Activated T-helper 2 cell treated with anti-CD3 and anti-CD28 coated beads, Interferon-gamma antibody, Interleukin-2, Interleukin-4, amounts not matched to agents 10 μg/mL and 5 μg/mL and 100 μg/mL, durations not matched to agents 14 hours and 24 hours and 36 hours (primary cell): ENCODE measurements at regions of chr1 and their contacts with region 1.

Region 1: DNA sequence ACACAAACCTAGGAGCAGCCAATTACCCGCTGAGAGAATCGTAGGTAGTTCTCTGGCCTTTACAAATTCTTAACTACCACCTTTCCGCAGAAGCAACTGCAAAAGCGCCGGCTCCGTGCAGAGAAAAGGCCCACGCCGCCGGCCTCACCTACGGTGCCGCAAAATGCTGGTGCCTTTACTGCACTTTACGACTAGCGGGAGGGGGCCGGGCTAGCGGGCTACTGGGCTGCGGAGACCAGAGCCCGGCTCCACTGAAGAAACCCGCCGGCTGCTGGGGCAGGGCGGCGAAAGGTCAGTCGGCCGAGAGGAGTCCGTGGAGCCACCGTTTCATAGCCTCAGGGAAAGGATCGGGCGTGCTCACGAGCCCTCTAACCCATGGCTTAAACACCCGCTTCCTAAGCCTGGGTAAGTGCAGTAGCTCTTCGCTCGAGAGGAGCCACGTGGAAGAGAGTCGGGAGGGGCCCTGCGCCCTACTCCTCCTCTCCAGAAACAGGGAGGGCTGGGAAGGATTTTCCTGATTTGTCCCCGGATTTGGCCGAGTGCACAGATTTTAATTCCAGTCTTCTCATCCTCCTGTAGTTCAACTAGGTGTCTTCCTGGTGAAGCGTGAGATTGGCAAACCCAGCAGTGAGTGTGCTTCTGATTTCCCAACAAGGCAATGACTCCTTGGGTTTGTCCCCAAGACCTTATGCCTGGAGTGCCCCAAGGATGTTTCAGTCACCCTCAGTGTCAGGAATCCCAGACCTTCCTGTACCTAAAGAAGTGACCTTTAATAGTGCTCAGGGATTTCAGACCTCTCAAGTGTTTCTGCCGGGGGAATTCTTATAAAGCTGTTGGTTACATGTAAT is at the start of gene DPH5:
- DNase-seq: peak; percentile 85
- H3K4me3 Mint-ChIP-seq: peak within 1 kb of the TSS; percentile 99
- H3K27ac Mint-ChIP-seq: peak within 1 kb of the TSS; percentile 94
- H3K4me1 Mint-ChIP-seq: peaks cover 51% of the 10 kb centered on the region
- H3K27me3 Mint-ChIP-seq: no peaks in the 10 kb centered on the region
- total RNA-seq, gene DPH5: 33.5 and 40.0 TPM in 2 replicates

Region 2: DNA sequence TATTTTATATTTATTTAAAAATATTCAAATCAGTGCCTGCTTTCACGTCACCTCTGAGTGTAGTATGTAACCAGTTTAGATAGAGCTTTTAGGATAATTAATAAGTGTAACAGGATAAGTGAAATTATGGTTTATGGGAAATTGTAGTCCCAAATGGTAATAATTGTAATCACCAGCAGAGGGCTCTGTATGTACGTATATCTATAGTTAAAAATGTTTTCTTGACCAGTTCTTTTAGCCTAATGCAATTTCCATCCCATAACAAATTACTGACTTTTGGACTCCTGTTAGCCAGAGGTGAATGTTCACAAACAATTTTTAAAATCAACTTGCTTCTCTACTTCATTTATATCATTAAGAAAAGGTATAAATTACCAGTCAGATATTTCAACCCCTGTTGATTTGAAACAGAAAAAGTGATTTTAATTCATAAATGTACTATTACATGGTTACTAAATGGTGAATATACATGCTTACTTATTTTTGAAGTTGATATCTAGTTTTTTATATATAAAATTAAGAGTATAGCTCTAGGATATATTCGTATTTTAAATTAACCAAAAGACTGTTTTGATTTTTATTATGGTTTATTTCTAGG is 104.7 kb before region 1 on chr1:
- intact Hi-C with region 1: loop called (anchors 5 kb)
- DNase-seq: no peak
- H3K4me3 Mint-ChIP-seq: no peak overlapping the region
- H3K27ac Mint-ChIP-seq: no peak overlapping the region
- H3K4me1 Mint-ChIP-seq: peaks cover 32% of the 10 kb centered on the region
- H3K27me3 Mint-ChIP-seq: no peaks in the 10 kb centered on the region

Region 3: DNA sequence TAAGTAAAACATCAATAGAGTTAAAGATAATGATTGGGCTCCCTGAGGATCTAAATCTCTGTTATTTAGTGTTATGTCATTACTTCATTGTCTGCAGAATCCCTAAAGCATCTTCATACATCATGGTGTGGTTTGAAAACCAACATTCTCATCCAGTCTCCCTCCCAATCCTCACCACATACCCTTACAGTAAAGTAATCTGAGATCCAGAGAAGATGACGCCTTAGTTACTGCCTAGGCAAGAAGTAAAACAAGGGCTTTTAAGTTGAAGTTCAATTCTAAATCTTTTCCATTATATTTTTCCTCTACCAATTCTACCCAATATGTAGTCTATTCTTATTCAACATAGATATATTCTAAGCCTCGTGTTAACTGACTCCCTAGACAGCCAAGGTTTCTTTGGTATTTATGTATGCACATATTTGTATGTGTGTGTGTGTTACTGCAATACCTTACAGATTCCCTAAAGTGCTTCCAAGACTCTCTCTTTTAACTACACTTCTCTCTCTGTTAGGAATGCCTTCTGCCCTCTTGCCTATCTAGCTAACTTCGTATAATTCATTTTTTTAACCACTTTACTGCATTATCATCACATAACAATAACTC is 17.5 kb before region 1 on chr1:
- intact Hi-C with region 1: loop called (anchors 2 kb)
- DNase-seq: no peak
- H3K4me3 Mint-ChIP-seq: no peak overlapping the region
- H3K27ac Mint-ChIP-seq: no peak overlapping the region
- H3K4me1 Mint-ChIP-seq: peaks cover 29% of the 10 kb centered on the region
- H3K27me3 Mint-ChIP-seq: no peaks in the 10 kb centered on the region

Region 4: GRCh38 chr1:101081496-101082488 is 55.9 kb after region 1 on chr1:
- intact Hi-C with region 1: loop called (anchors 2 kb)
- DNase-seq: peak; percentile 64
- H3K4me3 Mint-ChIP-seq: peak overlapping the region; percentile 0
- H3K27ac Mint-ChIP-seq: peak overlapping the region; percentile 67
- H3K4me1 Mint-ChIP-seq: peaks cover 51% of the 10 kb centered on the region
- H3K27me3 Mint-ChIP-seq: no peaks in the 10 kb centered on the region

Region 5: DNA sequence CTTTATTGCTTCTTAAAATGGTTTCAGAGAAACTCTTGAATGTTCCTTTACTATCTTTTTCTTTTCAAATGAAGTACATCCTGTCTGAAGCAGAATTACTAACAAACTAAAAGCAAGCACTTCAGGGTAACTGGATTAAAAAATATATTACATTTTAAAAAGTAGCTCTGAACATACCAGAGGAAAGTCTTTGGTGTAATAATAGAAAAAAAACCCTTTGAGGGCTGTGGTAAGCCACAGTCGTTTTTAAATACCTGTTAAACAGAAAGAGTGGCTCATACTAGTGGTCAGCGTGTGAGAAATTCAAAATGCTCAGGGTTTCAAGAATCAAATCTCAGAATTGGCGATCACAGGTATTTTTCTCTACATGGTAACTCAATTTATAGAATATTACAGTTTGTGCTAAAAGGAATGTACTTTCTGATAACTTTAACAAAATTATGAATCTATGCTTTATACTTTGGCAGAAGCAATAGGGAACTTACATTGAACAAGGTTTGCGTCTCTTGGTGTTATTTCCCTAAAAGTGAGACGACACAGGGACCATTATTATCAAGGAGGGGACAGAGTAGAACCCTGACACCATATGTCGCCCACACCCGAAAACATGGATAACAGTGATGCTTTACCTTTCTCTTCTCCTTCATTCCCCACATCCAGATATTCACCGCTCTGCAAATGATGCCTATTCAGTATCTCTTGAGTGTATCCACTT is 96.7 kb after region 1 on chr1:
- intact Hi-C with region 1: loop called (anchors 5 kb)
- DNase-seq: no peak
- H3K4me3 Mint-ChIP-seq: no peak overlapping the region
- H3K27ac Mint-ChIP-seq: peak overlapping the region; percentile 73
- H3K4me1 Mint-ChIP-seq: peaks cover 60% of the 10 kb centered on the region
- H3K27me3 Mint-ChIP-seq: no peaks in the 10 kb centered on the region

Region 6: GRCh38 chr1:101652476-101652875 is 626.6 kb after region 1 on chr1:
- intact Hi-C with region 1: no loop called
- DNase-seq: no peak
- H3K4me3 Mint-ChIP-seq: no peak overlapping the region
- H3K27ac Mint-ChIP-seq: no peak overlapping the region
- H3K4me1 Mint-ChIP-seq: no peaks in the 10 kb centered on the region
- H3K27me3 Mint-ChIP-seq: no peaks in the 10 kb centered on the region